ENCODE measurements at regions of chr10 and their contacts with region 1.

Region 1: DNA sequence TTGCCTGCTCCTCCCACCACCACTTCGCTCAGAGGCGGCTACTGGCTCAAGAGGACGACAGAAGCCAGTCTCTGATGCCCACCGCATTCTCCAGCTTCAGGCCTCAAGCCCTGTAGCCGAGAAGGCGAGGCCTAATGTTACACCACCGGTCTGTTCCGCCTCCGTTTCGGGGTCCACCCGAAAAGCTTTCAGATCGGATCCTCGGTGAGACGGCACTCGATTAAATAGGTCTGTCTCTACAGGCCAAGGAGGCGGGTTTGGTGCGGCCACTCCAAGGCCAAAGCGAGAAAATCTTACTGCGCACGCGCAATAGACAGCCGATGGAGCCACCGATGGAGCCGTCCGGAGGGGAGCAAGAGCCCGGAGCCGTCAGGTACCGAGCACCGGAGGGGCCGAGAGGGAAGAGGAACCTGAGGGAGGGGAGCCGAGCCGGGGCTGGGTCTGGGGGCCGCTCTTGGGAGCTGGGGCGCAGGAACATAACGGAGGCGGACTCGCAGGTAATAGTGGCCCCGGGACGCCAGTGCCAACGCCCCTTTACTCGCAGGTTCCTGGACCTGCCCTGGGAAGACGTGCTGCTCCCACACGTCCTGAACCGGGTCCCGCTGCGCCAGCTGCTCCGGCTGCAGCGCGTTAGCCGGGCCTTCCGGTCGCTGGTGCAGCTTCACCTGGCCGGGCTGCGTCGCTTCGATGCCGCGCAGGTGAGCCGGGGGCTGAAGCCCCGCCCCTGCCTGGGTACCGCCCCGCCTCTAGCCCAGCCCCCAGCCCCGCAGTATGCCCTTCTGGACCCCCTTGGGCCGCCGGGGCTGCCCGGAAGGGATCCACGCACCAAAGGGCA is at the start of gene FBXL15:
- DNase-seq: peak; percentile 98
- H3K4me3 Mint-ChIP-seq: peak within 1 kb of the TSS; percentile 94
- H3K27ac Mint-ChIP-seq: peak within 1 kb of the TSS; percentile 92
- H3K4me1 Mint-ChIP-seq: peaks cover 35% of the 10 kb centered on the region
- H3K27me3 Mint-ChIP-seq: peaks cover 20% of the 10 kb centered on the region
- total RNA-seq, gene FBXL15: 10.8 to 11.4 TPM

Region 2: DNA sequence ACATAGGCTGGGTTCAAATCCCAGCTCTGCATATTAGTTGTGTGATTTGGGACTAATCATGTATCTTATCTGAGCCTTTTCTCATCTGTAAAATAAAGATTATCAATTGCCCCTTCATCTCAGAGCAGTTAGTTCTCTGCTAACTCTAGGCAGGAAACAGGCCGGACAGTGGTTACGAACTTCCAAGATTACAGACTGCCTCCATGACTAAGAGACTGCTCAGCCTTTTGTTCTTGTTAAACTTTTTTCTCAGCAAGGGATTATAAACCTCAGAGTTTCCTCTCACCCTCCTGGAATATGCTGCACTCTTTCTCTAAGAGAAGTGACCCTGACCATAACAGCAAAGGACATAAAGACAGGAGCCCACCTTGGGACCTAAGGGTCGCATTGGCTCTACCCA is 78.1 kb before region 1 on chr10:
- CTCF ChIA-PET with region 1: no interaction called
- POLR2A ChIA-PET with region 1: no interaction called
- intact Hi-C with region 1: no loop called
- DNase-seq: no peak
- H3K4me3 Mint-ChIP-seq: no peak overlapping the region
- H3K27ac Mint-ChIP-seq: peak overlapping the region; percentile 60
- H3K4me1 Mint-ChIP-seq: peaks cover 39% of the 10 kb centered on the region
- H3K27me3 Mint-ChIP-seq: no peaks in the 10 kb centered on the region

Region 3: GRCh38 chr10:102408728-102409603 is 12.1 kb before region 1 on chr10:
- CTCF ChIA-PET with region 1: interaction called, 20 read pairs
- POLR2A ChIA-PET with region 1: interaction called, 10 read pairs
- intact Hi-C with region 1: loop called (anchors 1 kb)
- DNase-seq: peak; percentile 85
- H3K4me3 Mint-ChIP-seq: peak overlapping the region; percentile 74
- H3K27ac Mint-ChIP-seq: peak overlapping the region; percentile 3
- H3K4me1 Mint-ChIP-seq: peaks cover 30% of the 10 kb centered on the region
- H3K27me3 Mint-ChIP-seq: peaks cover 22% of the 10 kb centered on the region

Region 4: DNA sequence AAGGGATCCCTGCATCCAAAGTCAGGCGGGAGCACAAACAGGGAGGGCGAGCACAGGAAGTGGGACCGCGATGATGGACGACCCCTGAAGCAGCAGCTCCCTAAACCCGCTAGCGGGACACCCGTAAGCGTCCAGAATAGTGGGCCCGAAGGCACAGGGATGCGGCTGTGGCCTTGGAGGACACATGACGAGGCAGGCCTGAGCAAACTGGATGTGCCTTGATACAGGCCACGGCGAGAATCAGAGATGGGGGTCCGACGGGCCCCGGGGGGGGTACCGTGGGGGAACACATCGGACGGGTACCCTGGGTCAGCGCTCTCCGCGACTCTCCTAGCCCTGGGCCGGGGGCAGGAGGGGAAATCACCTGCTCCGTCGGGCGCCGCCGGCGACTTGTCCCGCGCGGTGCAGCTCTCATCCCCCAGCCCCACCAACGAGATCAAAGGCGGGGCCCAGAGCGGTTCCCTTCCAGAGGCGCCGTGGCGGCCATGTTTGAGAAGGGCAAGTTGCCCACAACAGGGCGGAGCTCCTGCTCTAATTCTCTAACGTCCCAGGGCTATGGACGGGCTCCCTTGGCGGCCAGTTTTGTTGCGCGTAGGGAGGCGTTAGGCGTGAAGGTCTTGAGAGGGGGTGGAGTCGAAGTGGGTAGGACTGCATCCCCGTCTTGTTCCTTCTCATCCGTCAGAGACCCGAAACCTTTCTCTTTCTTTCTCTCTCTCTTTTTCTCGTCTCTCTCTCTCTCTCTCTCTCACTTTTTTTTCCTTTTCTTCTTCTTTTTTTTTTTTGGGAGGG is 11.3 kb after region 1 on chr10 and contains the start of gene CUEDC2:
- CTCF ChIA-PET with region 1: interaction called, 36 read pairs
- POLR2A ChIA-PET with region 1: interaction called, 56 read pairs
- intact Hi-C with region 1: loop called (anchors 1 kb)
- DNase-seq: peak; percentile 99
- H3K4me3 Mint-ChIP-seq: peak within 1 kb of the TSS; percentile 84
- H3K27ac Mint-ChIP-seq: peak within 1 kb of the TSS; percentile 88
- H3K4me1 Mint-ChIP-seq: peaks cover 42% of the 10 kb centered on the region
- H3K27me3 Mint-ChIP-seq: no peaks in the 10 kb centered on the region
- total RNA-seq, gene CUEDC2: 68.6 to 68.9 TPM

Region 5: DNA sequence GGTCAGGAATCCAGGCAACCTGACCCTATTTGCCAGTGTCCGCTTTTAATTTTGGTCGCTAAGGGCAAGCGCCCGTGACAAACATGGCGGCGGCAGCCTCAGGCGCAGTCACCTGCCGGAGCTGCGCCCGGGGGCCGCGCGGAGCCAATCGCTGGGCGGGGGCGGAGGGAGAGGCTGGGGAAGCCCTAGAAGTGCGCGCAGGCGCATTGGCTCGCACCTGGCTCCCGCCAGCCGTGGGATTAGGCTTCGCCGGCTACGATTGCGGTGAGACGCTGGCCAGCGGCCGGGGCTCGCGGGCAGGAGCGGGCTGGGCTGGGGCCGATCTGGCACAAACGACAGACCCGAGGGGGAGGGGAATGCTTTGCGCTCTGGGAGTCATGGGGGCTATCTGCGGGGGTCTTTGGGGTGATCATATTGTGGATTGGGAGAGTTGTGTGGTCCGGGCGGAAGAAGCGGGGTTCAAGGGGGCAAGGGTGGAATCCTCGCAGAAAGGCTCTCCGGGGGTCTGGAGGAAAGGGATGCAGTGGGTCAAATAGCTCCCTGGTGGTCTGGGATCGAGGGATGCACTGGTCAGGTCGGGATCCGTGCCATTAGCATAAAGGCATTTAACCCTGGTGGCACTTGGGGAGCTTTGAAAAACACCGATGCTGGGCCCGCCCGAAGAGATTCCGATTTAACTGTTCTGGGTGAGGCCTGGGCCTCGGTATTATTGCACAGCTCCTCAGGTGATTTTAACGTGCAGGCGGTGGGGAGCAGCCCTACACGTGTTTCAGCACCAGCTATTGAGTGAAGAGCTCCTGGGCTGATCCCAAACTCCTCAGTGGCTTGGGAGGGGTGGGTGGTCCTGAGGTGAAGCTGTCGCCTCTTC is 40.4 kb after region 1 on chr10:
- CTCF ChIA-PET with region 1: interaction called, 24 read pairs
- POLR2A ChIA-PET with region 1: interaction called, 5 read pairs
- intact Hi-C with region 1: no loop called
- DNase-seq: peak; percentile 95
- H3K4me3 Mint-ChIP-seq: peak overlapping the region; percentile 82
- H3K27ac Mint-ChIP-seq: peak overlapping the region; percentile 47
- H3K4me1 Mint-ChIP-seq: peaks cover 23% of the 10 kb centered on the region
- H3K27me3 Mint-ChIP-seq: no peaks in the 10 kb centered on the region

Region 6: GRCh38 chr10:102660888-102661657 is 240.0 kb after region 1 on chr10:
- CTCF ChIA-PET with region 1: no interaction called
- POLR2A ChIA-PET with region 1: no interaction called
- intact Hi-C with region 1: no loop called
- DNase-seq: peak; percentile 88
- H3K4me3 Mint-ChIP-seq: peak overlapping the region; percentile 62
- H3K27ac Mint-ChIP-seq: peak overlapping the region; percentile 87
- H3K4me1 Mint-ChIP-seq: peaks cover 44% of the 10 kb centered on the region
- H3K27me3 Mint-ChIP-seq: no peaks in the 10 kb centered on the region